CD4-positive, alpha-beta T cell (primary cell): ENCODE measurements at regions of chr5 and their contacts with region 1.

Region 1: GRCh38 chr5:68252673-68253623 is 37.4 kb downstream of the PIK3R1 start:
- DNase-seq: peak; percentile 16 to 76 (median 42)
- ATAC-seq: no peak
- H3K4me3 ChIP-seq: no peak overlapping the region
- H3K4me3 Mint-ChIP-seq: peak overlapping the region; percentile 49
- H3K27ac ChIP-seq: no peak overlapping the region
- H3K27ac Mint-ChIP-seq: peak overlapping the region; percentile 82
- H3K4me1 ChIP-seq: peaks cover 54% of the 10 kb centered on the region
- H3K4me1 Mint-ChIP-seq: peaks cover 95% of the 10 kb centered on the region
- H3K27me3 ChIP-seq: no peaks in the 10 kb centered on the region
- H3K27me3 Mint-ChIP-seq: no peaks in the 10 kb centered on the region
- CTCF ChIP-seq: peak; percentile 71

Region 2: GRCh38 chr5:67165526-67166459 is 1087.2 kb before region 1 on chr5:
- CTCF ChIA-PET with region 1: no interaction called
- POLR2A ChIA-PET with region 1: interaction called, 5 read pairs
- intact Hi-C with region 1: loop called in 1 of 2 experiments (anchors 10 kb)
- DNase-seq: peak; percentile 65 to 91 (median 80)
- ATAC-seq: peak; percentile 69
- H3K4me3 ChIP-seq: peak overlapping the region; percentile 56
- H3K4me3 Mint-ChIP-seq: peak overlapping the region; percentile 88
- H3K27ac ChIP-seq: peak overlapping the region; percentile 83 to 88
- H3K27ac Mint-ChIP-seq: peak overlapping the region; percentile 97
- H3K4me1 ChIP-seq: peaks cover 73% of the 10 kb centered on the region
- H3K4me1 Mint-ChIP-seq: peaks cover 71% of the 10 kb centered on the region
- H3K27me3 ChIP-seq: no peaks in the 10 kb centered on the region
- H3K27me3 Mint-ChIP-seq: no peaks in the 10 kb centered on the region
- CTCF ChIP-seq: peak; percentile 73

Region 3: GRCh38 chr5:67493676-67494075 is 759.3 kb before region 1 on chr5:
- CTCF ChIA-PET with region 1: no interaction called
- POLR2A ChIA-PET with region 1: no interaction called
- intact Hi-C with region 1: loop called (anchors 5 kb)
- DNase-seq: peak in 4 of 14 experiments; percentile 6 to 18 (median 14)
- ATAC-seq: no peak
- H3K4me3 ChIP-seq: no peak overlapping the region
- H3K4me3 Mint-ChIP-seq: no peak overlapping the region
- H3K27ac ChIP-seq: no peak overlapping the region
- H3K27ac Mint-ChIP-seq: no peak overlapping the region
- H3K4me1 ChIP-seq: no peaks in the 10 kb centered on the region
- H3K4me1 Mint-ChIP-seq: no peaks in the 10 kb centered on the region
- H3K27me3 ChIP-seq: no peaks in the 10 kb centered on the region
- H3K27me3 Mint-ChIP-seq: no peaks in the 10 kb centered on the region
- CTCF ChIP-seq: no peak

Region 4: GRCh38 chr5:68200288-68200687 is 52.7 kb before region 1 on chr5:
- CTCF ChIA-PET with region 1: no interaction called
- POLR2A ChIA-PET with region 1: no interaction called
- intact Hi-C with region 1: no loop called
- DNase-seq: no peak
- ATAC-seq: no peak
- H3K4me3 ChIP-seq: no peak overlapping the region
- H3K4me3 Mint-ChIP-seq: no peak overlapping the region
- H3K27ac ChIP-seq: no peak overlapping the region
- H3K27ac Mint-ChIP-seq: no peak overlapping the region
- H3K4me1 ChIP-seq: no peaks in the 10 kb centered on the region
- H3K4me1 Mint-ChIP-seq: no peaks in the 10 kb centered on the region
- H3K27me3 ChIP-seq: peaks cover 0 to 3% of the 10 kb centered on the region in 2 experiments
- H3K27me3 Mint-ChIP-seq: peaks cover 10% of the 10 kb centered on the region
- CTCF ChIP-seq: no peak

Region 5: DNA sequence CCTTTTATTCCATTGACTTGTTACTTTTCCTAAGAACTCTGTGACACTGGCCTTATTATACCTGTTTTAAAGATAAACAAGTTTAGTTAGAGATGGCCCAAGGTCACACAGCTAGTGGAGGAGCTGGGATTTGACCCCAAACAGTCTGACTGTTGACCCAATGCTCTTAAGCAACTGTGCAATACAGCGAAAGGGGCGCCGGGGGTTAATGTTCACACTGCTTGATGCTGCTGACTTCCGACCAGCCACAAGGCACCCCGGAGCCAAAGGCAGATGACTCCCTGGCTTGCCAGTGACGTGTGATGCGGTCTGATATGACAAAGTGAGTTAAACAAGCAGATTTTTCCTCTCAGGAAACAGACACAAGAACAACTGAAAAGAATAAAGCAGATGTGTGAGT is 13.5 kb before region 1 on chr5:
- CTCF ChIA-PET with region 1: interaction called, 4 read pairs
- POLR2A ChIA-PET with region 1: interaction called, 7 read pairs
- intact Hi-C with region 1: loop called in 1 of 2 experiments (anchors 1 kb)
- DNase-seq: peak; percentile 61 to 92 (median 74)
- ATAC-seq: peak; percentile 96
- H3K4me3 ChIP-seq: peak overlapping the region; percentile 2
- H3K4me3 Mint-ChIP-seq: peak overlapping the region; percentile 82
- H3K27ac ChIP-seq: peak overlapping the region; percentile 4 to 18
- H3K27ac Mint-ChIP-seq: peak overlapping the region; percentile 90
- H3K4me1 ChIP-seq: peaks cover 37% of the 10 kb centered on the region
- H3K4me1 Mint-ChIP-seq: peaks cover 93% of the 10 kb centered on the region
- H3K27me3 ChIP-seq: no peaks in the 10 kb centered on the region
- H3K27me3 Mint-ChIP-seq: no peaks in the 10 kb centered on the region
- CTCF ChIP-seq: no peak

Region 6: GRCh38 chr5:68279984-68280383 is 27.0 kb after region 1 on chr5:
- CTCF ChIA-PET with region 1: interaction called, 5 read pairs
- POLR2A ChIA-PET with region 1: interaction called, 22 read pairs
- intact Hi-C with region 1: loop called in 1 of 2 experiments (anchors 5 kb)
- DNase-seq: peak in 11 of 14 experiments; percentile 20 to 93 (median 40)
- ATAC-seq: peak; percentile 89
- H3K4me3 ChIP-seq: peak overlapping the region; percentile 56
- H3K4me3 Mint-ChIP-seq: peak overlapping the region; percentile 93
- H3K27ac ChIP-seq: peak overlapping the region; percentile 68 to 72
- H3K27ac Mint-ChIP-seq: peak overlapping the region; percentile 91
- H3K4me1 ChIP-seq: peaks cover 53% of the 10 kb centered on the region
- H3K4me1 Mint-ChIP-seq: peaks cover 94% of the 10 kb centered on the region
- H3K27me3 ChIP-seq: no peaks in the 10 kb centered on the region
- H3K27me3 Mint-ChIP-seq: no peaks in the 10 kb centered on the region
- CTCF ChIP-seq: no peak